IMR-90 (cell line): ENCODE measurements at regions of chr5 and their contacts with region 1.

Region 1: DNA sequence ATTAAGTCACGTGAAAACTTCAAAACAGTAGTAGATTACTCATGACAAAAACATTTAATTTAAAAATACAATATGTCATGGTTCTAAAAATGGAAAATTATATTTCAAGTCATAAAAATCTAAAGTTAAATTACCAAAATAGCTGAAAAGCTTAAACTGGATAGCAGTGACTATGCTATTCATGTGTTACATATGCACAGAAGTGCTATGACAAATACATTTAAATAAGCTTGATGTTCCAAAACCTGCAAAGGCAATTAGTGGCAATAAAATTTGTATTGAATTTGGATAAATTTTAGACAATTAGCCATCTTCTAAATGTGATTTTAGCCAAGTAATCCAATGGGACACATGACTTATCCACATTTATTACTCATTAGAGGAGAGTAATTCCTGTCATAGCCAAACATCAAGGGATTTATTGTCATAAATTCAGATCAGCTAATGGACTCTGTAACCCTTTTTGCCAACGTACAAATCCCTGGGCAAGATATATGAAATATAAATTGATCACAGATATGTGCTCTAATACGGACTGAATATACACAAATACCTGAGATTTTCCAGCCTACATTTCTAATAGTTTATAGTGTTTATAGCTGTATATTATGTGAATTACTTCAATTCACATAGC is 419.4 kb downstream of the ISL1 start:
- DNase-seq: no peak
- ATAC-seq: no peak
- H3K4me3 ChIP-seq: no peak overlapping the region
- H3K27ac ChIP-seq: no peak overlapping the region
- H3K4me1 ChIP-seq: no peaks in the 10 kb centered on the region
- H3K27me3 ChIP-seq: no peaks in the 10 kb centered on the region
- CTCF ChIP-seq: no peak
- POLR2A ChIP-seq: no peak
- RAD21 ChIP-seq: no peak

Region 2: DNA sequence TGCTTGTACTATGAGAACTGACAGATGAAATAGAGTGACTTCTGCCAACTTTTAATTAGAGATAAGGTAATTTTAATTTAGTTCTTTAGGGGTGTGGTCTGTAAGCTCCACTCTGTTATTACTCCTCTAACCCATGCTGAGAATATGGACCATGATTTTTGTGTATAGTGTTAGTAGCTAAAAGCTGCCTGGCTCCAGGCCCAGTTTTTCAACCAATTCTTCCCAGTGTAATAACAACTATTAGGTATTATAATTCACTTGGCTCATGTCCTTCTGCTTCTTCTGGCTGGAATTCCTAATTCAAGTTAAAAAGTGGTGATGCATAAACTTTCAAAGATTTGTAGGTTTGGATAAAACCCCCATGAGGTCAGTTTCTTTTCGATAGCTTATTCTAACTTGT is 203.1 kb before region 1 on chr5:
- CTCF ChIA-PET with region 1: no interaction called
- POLR2A ChIA-PET with region 1: no interaction called
- dilution Hi-C with region 1: no loop called
- in situ Hi-C with region 1: no loop called
- intact Hi-C with region 1: loop called (anchors 5 kb)
- DNase-seq: no peak
- ATAC-seq: no peak
- H3K4me3 ChIP-seq: no peak overlapping the region
- H3K27ac ChIP-seq: no peak overlapping the region
- H3K4me1 ChIP-seq: no peaks in the 10 kb centered on the region
- H3K27me3 ChIP-seq: no peaks in the 10 kb centered on the region
- CTCF ChIP-seq: no peak
- POLR2A ChIP-seq: no peak
- RAD21 ChIP-seq: no peak

Region 3: GRCh38 chr5:51746023-51746422 is 56.6 kb before region 1 on chr5:
- CTCF ChIA-PET with region 1: no interaction called
- POLR2A ChIA-PET with region 1: no interaction called
- dilution Hi-C with region 1: no loop called
- in situ Hi-C with region 1: no loop called
- intact Hi-C with region 1: no loop called
- DNase-seq: no peak
- ATAC-seq: no peak
- H3K4me3 ChIP-seq: no peak overlapping the region
- H3K27ac ChIP-seq: no peak overlapping the region
- H3K4me1 ChIP-seq: no peaks in the 10 kb centered on the region
- H3K27me3 ChIP-seq: no peaks in the 10 kb centered on the region
- CTCF ChIP-seq: no peak
- POLR2A ChIP-seq: no peak
- RAD21 ChIP-seq: no peak